AG04450 (cell line): ENCODE measurements at regions of chr17 and their contacts with region 1.

Region 1: GRCh38 chr17:42843358-42843934 is 934 bp upstream of the AOC2 start:
- DNase-seq: peak; percentile 48
- H3K4me3 ChIP-seq: no peak overlapping the region
- H3K27ac ChIP-seq: no peak overlapping the region
- H3K27me3 ChIP-seq: no peaks in the 10 kb centered on the region
- CTCF ChIP-seq: peak; percentile 100

Region 2: GRCh38 chr17:42798383-42799380 is 44.8 kb before region 1 on chr17 and contains the starts of genes CNTD1 and COA3:
- CTCF ChIA-PET with region 1: no interaction called
- POLR2A ChIA-PET with region 1: no interaction called
- DNase-seq: peak; percentile 55
- H3K4me3 ChIP-seq: peak within 1 kb of the TSS; percentile 96
- H3K27ac ChIP-seq: peak within 1 kb of the TSS; percentile 57
- H3K27me3 ChIP-seq: peaks cover 3% of the 10 kb centered on the region
- CTCF ChIP-seq: no peak
- polyA plus RNA-seq, gene CNTD1: 0.09 and 0.14 TPM in 2 replicates
- polyA plus RNA-seq, gene COA3: 86.7 and 96.3 TPM in 2 replicates

Region 3: DNA sequence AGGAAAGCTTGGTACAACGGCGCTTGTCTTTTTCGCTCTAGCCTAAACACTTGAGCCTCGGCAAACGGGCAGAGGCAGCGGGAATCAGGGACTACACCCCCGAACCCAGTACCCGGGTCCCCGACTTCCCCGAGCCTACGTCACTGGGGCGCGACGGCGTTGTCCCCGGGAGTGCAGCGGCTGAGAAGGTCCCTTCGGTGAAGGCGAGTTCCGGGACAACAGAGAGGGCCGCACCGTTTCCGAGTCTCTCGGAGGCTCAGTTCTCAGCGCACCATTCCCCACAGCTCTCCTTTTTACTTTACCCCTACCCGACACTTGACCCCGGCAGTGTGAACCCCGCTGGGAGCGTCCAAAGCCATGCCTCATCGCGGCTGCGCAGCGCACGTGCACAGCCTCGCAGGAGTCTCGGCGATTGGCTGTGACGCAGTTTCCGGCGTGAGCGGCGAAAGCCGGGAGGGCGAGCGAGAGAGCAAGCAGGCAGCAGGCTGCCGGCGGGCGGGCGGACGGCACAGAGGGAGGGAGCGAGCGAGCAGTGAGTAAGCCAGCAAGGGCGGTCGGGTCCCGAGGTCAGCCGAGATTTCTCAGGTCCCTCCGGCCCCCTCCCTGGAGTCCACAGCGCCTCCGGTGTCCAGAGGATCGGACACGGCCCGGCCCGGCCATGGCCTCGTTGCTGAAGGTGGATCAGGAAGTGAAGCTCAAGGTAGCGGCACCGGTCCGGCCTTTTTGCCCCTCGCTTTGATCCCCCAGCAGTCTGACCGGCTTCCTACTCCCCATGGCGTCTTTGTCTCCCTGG is 10.3 kb before region 1 on chr17 and contains the start of gene PSME3:
- CTCF ChIA-PET with region 1: interaction called, 16 read pairs
- POLR2A ChIA-PET with region 1: no interaction called
- DNase-seq: peak; percentile 47
- H3K4me3 ChIP-seq: peak within 1 kb of the TSS; percentile 99
- H3K27ac ChIP-seq: peak within 1 kb of the TSS; percentile 65
- H3K27me3 ChIP-seq: no peaks in the 10 kb centered on the region
- CTCF ChIP-seq: no peak
- polyA plus RNA-seq, gene PSME3: 111 and 129 TPM in 2 replicates

Region 4: GRCh38 chr17:42928714-42929496 is 85.5 kb after region 1 on chr17:
- CTCF ChIA-PET with region 1: interaction called, 64 read pairs
- POLR2A ChIA-PET with region 1: interaction called, 8 read pairs
- DNase-seq: peak; percentile 52
- H3K4me3 ChIP-seq: no peak overlapping the region
- H3K27ac ChIP-seq: peak overlapping the region; percentile 63
- H3K27me3 ChIP-seq: peaks cover 5% of the 10 kb centered on the region
- CTCF ChIP-seq: peak; percentile 65

Region 5: DNA sequence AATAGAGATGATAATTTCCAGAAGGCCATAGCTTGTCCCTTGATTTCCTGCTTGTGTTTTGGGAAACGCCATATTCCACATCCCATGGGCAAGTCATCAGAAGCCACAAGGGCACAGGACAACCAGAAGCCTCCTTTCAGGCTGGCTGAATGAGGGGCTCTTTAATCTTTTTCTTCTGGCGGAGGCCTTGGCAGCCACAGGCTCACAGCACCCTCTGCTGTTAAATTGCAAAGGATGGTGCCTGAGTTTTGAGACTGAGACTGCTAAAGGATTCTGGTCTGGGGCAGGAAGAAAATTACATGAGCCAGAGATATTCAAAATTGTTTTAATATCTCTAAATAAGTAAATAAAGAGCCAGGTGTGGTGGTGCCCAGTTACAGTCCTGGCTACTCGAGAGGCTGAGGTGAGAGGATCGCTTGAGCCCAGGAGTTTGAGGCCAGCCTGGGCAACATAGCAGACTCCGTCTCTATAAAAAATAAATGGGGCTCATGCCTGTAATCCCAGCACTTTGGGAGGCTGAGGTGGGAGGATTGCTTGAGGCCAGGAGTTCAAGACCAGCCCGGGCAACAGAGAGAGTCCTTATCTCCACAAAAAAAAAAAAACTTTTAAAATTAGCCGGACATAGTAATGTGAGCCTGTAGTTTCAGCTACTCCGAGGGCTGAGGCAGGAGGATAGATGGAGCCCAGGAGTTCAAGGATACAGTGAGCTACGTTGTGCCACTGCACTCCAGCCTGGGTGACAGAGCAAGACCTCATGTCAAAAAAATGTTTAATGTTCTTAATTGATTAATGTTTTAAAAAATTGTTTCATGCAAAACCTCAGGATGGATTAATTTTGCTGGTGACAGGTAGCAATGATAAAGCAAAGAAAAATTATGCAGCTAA is 94.5 kb after region 1 on chr17:
- CTCF ChIA-PET with region 1: interaction called, 98 read pairs
- POLR2A ChIA-PET with region 1: no interaction called
- DNase-seq: no peak
- H3K4me3 ChIP-seq: no peak overlapping the region
- H3K27ac ChIP-seq: no peak overlapping the region
- H3K27me3 ChIP-seq: peaks cover 13% of the 10 kb centered on the region
- CTCF ChIP-seq: peak; percentile 79